B cell (primary cell): ENCODE measurements at regions of chr4 and their contacts with region 1.

Region 1: DNA sequence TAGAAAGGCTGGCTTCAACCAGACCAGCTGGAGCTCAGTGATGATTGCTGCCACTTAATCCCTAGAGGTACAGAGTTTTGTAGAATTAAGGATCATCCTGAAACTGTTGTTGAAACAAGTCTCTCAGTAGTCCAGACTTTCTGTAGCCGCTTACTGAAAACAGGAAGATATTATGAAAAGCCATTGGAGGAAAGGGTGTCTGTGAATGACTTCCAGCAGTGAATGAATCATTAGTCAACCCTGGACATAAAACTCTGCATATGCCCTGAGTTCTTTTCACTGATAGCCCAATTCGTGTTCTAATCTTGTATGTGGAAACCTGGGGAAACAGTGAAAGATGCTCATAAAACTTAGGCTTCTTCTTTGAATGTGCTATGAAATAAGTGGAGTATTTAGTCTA is 14.8 kb downstream of the HOPX start:
- DNase-seq: no peak
- ATAC-seq: no peak
- H3K4me3 ChIP-seq: no peak overlapping the region
- H3K4me3 Mint-ChIP-seq: no peak overlapping the region
- H3K27ac ChIP-seq: no peak overlapping the region
- H3K27ac Mint-ChIP-seq: no peak overlapping the region
- H3K4me1 ChIP-seq: no peaks in the 10 kb centered on the region
- H3K4me1 Mint-ChIP-seq: no peaks in the 10 kb centered on the region
- H3K27me3 ChIP-seq: peaks cover 0 to 3% (median 0%) of the 10 kb centered on the region in 4 experiments
- H3K27me3 Mint-ChIP-seq: peaks cover 21% of the 10 kb centered on the region
- CTCF ChIP-seq: no peak

Region 2: GRCh38 chr4:56708146-56708545 is 41.9 kb after region 1 on chr4:
- CTCF ChIA-PET with region 1: no interaction called
- POLR2A ChIA-PET with region 1: no interaction called
- intact Hi-C with region 1: loop called (anchors 2 kb)
- DNase-seq: no peak
- ATAC-seq: no peak
- H3K4me3 ChIP-seq: no peak overlapping the region
- H3K4me3 Mint-ChIP-seq: no peak overlapping the region
- H3K27ac ChIP-seq: no peak overlapping the region
- H3K27ac Mint-ChIP-seq: no peak overlapping the region
- H3K4me1 ChIP-seq: no peaks in the 10 kb centered on the region
- H3K4me1 Mint-ChIP-seq: no peaks in the 10 kb centered on the region
- H3K27me3 ChIP-seq: no peaks in the 10 kb centered on the region
- H3K27me3 Mint-ChIP-seq: no peaks in the 10 kb centered on the region
- CTCF ChIP-seq: no peak